AG04450 (cell line): ENCODE measurements at regions of chr2 and their contacts with region 1.

Region 1: GRCh38 chr2:228657807-228658402 is 476.4 kb upstream of the SPHKAP start:
- DNase-seq: no peak
- H3K4me3 ChIP-seq: no peak overlapping the region
- H3K27ac ChIP-seq: no peak overlapping the region
- H3K27me3 ChIP-seq: no peaks in the 10 kb centered on the region
- CTCF ChIP-seq: peak; percentile 59

Region 2: GRCh38 chr2:228048838-228049490 is 608.9 kb before region 1 on chr2:
- CTCF ChIA-PET with region 1: interaction called, 11 read pairs
- POLR2A ChIA-PET with region 1: no interaction called
- DNase-seq: no peak
- H3K4me3 ChIP-seq: no peak overlapping the region
- H3K27ac ChIP-seq: no peak overlapping the region
- H3K27me3 ChIP-seq: no peaks in the 10 kb centered on the region
- CTCF ChIP-seq: peak; percentile 57